GM10248 (cell line): ENCODE measurements at regions of chr3 and their contacts with region 1.

Region 1: DNA sequence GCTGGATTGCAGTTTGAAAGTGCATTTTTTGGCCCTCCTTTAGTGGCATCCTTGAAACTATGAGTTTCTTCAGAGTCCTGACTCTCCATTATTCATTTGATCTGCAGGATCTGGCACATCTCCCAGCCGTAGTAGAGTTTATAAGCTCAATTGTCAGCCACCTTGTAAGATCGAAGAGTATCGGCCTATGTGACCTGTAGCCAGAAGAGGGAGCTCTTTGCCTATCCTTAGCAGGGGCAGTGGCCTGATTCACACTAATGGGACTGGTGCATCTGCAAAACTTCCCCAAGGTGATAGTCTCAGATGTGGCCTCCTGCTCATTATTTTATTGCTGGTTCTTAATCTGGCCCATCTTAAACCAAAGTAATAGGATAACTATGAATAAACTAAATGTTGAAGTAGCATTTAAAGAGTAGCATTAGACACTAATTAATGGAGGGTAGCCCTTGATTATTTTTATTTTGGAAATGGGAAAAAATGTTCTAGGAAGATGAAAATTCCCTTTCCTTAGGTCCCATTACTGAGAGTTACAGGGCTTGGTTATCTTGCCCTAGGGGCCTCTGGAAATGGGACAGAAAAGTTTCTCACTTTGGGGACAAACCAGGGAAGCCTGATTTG is 21.2 kb downstream of the GCSAM start:
- DNase-seq: peak; percentile 78
- CTCF ChIP-seq: peak; percentile 71

Region 2: GRCh38 chr3:112128843-112129727 is 17.2 kb after region 1 on chr3:
- CTCF ChIA-PET with region 1: interaction called, 94 read pairs
- POLR2A ChIA-PET with region 1: interaction called, 19 read pairs
- DNase-seq: peak; percentile 40
- CTCF ChIP-seq: no peak

Region 3: DNA sequence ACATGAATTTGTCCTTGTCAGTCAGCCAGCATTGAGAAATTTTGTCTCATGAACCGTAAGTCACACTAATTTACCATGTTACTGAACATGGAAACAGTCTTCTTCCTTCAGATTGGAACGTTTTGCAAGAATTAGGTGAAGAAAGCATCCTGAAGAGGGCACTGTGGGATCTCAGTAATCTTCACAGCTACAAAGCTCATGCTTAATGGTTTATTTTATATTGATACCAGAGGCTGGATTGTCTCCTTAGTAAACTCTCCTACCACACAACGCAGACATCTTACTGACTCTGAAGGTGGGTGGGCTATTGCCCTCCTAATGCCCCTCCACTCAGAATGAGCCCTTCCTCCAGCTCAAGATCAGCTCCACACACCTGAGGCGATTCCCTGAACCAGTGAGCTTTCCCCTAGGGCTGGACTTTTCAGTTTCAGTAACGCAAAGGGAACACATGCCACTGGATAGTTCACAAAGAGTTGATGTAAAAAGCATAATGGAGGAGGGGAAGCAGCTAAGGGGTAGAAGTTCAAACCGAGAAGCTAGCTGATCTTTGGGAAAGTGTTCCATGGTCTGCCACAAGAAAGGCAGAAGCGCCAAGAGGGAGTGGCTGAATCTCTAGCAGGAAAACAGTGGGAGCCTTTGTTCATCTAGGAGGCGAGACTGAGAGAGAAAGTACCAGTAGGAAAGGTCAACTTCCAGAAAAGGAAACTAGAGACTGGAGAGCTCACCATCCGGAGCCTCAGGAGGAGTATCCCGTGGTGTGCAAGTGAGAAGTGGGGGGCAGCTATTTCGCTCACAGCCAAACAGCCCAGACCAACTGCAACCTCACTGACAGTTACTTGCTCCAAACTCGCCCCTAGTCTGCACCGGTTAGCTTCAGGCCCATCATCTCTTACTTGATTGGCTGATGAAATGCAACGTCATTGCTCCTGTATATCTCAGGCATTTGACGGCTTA is 181.8 kb after region 1 on chr3 and contains the start of gene SLC9C1:
- CTCF ChIA-PET with region 1: interaction called, 21 read pairs
- POLR2A ChIA-PET with region 1: no interaction called
- DNase-seq: peak; percentile 53
- CTCF ChIP-seq: peak; percentile 54

Region 4: DNA sequence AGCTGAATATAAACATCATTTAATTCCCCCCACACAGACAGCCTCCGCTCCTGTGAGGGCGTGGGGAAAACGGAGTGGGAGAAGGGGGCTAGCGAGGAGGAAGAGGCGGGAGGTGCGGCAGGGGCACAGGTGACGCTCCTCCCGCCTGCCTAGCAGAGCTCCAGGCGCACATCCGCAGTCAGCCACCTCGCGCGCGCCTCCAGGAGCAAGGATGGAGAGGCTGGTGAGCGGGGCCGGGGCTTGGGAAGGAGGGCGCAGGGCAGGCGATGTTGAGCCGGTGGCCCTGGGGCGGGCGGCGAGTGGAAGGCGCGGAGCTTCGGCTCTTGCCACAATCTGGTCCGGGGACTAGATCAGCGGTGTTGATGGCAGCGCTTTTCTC is 221.1 kb after region 1 on chr3 and contains the start of gene CD200:
- CTCF ChIA-PET with region 1: interaction called, 13 read pairs
- POLR2A ChIA-PET with region 1: interaction called, 3 read pairs
- DNase-seq: peak; percentile 55
- CTCF ChIP-seq: no peak

Region 5: DNA sequence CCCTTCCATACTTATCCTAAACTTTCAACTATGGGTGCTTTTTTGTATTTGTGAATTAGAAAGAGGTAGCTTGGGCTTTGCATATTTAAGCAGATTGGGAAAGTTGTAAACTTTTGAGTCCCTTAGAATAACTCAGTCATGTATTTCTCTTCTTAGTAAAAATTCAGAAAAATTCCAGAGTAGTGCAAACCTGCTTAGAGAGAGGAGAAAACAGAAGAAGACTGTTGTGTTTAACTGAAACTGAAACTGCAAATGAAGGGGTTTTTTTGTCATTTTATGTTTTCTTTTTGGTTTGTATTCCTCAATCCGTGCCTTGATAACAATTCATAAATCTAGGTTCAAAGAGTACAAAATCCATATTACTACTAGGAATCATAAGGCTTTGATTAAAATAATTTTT is 252.4 kb after region 1 on chr3:
- CTCF ChIA-PET with region 1: interaction called, 18 read pairs
- POLR2A ChIA-PET with region 1: no interaction called
- DNase-seq: peak; percentile 25
- CTCF ChIP-seq: no peak

Region 6: GRCh38 chr3:112531358-112531781 is 419.5 kb after region 1 on chr3:
- CTCF ChIA-PET with region 1: interaction called, 20 read pairs
- POLR2A ChIA-PET with region 1: no interaction called
- DNase-seq: peak; percentile 26
- CTCF ChIP-seq: peak; percentile 27